Posterior vena cava (tissue), 2 donors: ENCODE measurements at regions of chr7 and their contacts with region 1.

Region 1: DNA sequence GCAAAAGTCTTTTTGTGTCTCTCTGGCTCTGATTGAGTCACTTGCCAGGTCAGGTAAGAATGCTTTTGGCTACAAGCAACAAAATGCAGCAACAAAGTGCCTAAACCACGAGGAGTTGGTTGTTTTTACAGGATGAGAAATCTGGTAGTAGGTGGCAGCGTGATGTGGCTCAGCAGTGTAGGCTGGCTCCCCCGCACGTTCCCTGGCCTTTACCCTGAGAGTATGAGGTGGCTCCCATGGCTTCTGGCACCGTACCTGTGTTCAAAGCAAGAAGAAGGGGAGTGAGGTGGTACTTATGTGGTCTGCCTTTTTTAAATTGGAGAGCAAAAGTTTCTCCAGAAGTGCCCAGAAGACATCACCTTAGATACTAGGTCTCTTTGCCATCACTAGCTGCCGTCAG is 11.7 kb downstream of the PRKRIP1 start:
- DNase-seq: no peak

Region 2: GRCh38 chr7:102030696-102031095 is 377.2 kb before region 1 on chr7:
- intact Hi-C with region 1: loop called in 1 of 2 experiments (anchors 5 kb)
- DNase-seq: peak; percentile 25